H1 (cell line): ENCODE measurements at regions of chr5 and their contacts with region 1.

Region 1: GRCh38 chr5:168987543-168988300 is 313.2 kb downstream of the SLIT3 start:
- DNase-seq: peak; percentile 25 to 91
- H3K4me3 ChIP-seq: no peak overlapping the region
- H3K27ac ChIP-seq: no peak overlapping the region
- H3K4me1 ChIP-seq: peaks cover 3 to 22% (median 13%) of the 10 kb centered on the region in 4 experiments; a peak in 6 of 7 replicates
- H3K27me3 ChIP-seq: no peaks in the 10 kb centered on the region
- CTCF ChIP-seq: peak; percentile 46 to 85 (median 78)
- EP300 ChIP-seq: no peak
- POLR2A ChIP-seq: no peak
- RAD21 ChIP-seq: peak; percentile 92 to 94

Region 2: DNA sequence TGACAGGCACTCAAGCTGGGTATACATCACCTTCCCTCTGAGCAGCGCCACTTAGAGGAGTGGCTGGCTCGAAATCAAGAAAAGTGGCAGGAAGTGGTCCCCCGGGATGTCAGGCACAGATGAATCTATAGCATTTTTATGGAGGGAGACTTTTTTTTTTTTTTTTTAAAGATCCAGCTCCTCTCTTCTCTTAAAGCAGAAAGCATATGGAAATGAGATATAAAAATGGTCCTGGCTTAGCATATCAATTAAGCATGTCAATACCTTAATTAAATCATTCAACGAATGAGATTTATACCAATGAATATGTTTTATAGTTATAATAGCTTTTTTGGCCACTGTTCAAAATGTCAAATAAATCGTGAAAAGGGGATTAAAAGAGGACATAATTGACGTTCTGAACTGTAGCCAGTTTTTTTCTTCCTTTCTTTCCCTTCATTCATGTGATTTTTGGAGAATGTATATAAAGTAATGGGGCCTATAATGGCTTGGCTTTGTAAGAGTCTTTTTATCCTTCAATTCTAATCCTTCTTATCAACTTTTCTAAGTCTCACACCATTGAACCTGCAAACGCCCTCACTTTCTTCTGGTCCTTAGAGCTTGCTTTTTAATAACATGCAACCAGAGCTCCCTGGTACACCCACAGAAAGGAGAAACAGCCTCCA is 89.3 kb before region 1 on chr5:
- CTCF ChIA-PET with region 1: no interaction called
- POLR2A ChIA-PET with region 1: no interaction called
- DNase-seq: no peak
- H3K4me3 ChIP-seq: no peak overlapping the region
- H3K27ac ChIP-seq: no peak overlapping the region
- H3K4me1 ChIP-seq: peaks cover 0 to 2% (median under 1%) of the 10 kb centered on the region in 4 experiments; a peak in 3 of 7 replicates
- H3K27me3 ChIP-seq: no peaks in the 10 kb centered on the region
- CTCF ChIP-seq: no peak
- EP300 ChIP-seq: no peak
- POLR2A ChIP-seq: no peak
- RAD21 ChIP-seq: no peak

Region 3: GRCh38 chr5:168934169-168934568 is 53.6 kb before region 1 on chr5:
- CTCF ChIA-PET with region 1: no interaction called
- POLR2A ChIA-PET with region 1: no interaction called
- DNase-seq: no peak
- H3K4me3 ChIP-seq: no peak overlapping the region
- H3K27ac ChIP-seq: no peak overlapping the region
- H3K4me1 ChIP-seq: peaks cover 0 to 5% (median 3%) of the 10 kb centered on the region in 4 experiments; a peak in 4 of 7 replicates
- H3K27me3 ChIP-seq: no peaks in the 10 kb centered on the region
- CTCF ChIP-seq: no peak
- EP300 ChIP-seq: no peak
- POLR2A ChIP-seq: no peak
- RAD21 ChIP-seq: no peak

Region 4: DNA sequence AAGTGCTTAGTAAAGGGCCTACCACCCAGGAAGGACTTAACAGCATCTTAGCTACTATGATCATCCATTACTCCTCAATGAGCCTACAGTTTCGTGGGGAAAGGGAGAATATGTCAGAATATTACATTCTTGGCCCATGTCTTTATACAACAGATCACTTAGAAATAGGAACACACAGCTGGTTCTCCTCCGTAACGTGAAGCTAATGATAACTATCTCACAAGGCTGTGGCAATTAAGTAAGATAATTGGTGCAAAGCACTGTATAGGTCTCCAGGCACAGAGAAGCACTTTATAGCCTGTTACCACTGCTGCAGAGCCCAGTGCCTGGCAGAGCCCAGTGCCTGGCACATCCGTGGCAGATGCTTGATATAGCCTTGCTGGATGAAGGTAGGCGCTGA is 34.4 kb before region 1 on chr5:
- CTCF ChIA-PET with region 1: interaction called, 10 read pairs
- POLR2A ChIA-PET with region 1: no interaction called
- DNase-seq: no peak
- H3K4me3 ChIP-seq: no peak overlapping the region
- H3K27ac ChIP-seq: no peak overlapping the region
- H3K4me1 ChIP-seq: no peaks in the 10 kb centered on the region
- H3K27me3 ChIP-seq: no peaks in the 10 kb centered on the region
- CTCF ChIP-seq: no peak
- EP300 ChIP-seq: no peak
- POLR2A ChIP-seq: no peak
- RAD21 ChIP-seq: no peak

Region 5: DNA sequence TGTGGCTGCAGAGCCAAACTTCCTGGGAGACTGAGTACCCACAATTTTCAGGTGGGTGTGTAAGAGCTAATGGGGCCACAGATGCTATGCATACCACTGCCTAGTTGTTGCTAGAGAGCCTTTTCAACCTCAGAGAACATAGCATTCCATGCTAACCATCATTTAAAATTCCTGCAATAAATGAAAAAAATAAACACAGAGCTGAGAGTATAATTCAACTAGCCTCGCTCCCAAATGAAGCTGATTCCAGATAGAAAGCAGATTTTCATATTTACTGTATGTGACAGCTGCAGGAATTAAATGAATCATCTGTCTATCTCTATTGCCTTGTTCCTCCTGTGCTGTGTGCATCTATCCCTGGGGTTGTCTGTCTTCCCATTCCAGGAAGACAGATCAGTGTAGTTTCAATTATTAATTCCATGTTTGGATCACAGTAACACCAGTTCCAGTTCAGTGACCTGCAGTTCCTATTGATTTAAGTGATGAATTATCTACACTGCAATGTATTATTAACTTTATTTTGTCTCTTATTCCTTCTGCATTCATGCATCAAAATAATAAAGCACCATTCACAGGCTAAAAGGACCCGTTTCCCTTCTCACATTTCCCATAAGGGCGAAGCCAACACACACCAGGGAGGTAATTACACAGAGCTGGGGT is 11.3 kb before region 1 on chr5:
- CTCF ChIA-PET with region 1: interaction called, 18 read pairs
- POLR2A ChIA-PET with region 1: no interaction called
- DNase-seq: no peak
- H3K4me3 ChIP-seq: no peak overlapping the region
- H3K27ac ChIP-seq: no peak overlapping the region
- H3K4me1 ChIP-seq: peaks cover 0 to 9% (median 3%) of the 10 kb centered on the region in 4 experiments; a peak in 2 of 7 replicates
- H3K27me3 ChIP-seq: no peaks in the 10 kb centered on the region
- CTCF ChIP-seq: no peak
- EP300 ChIP-seq: no peak
- POLR2A ChIP-seq: no peak
- RAD21 ChIP-seq: no peak

Region 6: DNA sequence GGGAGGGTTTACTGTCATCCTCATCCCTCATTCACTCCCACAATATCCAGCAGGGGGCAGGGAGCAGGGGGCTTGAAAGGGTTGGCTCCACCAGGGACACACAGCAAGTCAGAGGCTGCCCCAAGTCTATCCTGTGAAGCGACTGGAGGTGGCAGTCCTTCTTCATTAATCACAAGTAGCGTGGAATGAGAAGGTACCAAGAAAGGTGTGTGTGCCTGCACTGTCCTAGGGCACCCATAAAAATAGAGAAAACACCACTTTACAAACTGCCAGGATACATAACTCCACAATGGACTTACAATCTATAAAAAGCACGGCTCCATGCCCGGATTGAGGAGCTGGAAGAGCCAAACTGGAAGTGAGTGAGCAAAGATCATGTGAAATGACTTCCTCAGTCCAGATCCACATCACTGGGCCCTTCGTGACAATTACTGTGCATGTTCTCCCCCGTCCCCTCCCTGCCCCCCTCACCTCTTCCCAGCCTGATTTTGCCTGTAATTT is 129.3 kb after region 1 on chr5:
- CTCF ChIA-PET with region 1: interaction called, 12 read pairs
- POLR2A ChIA-PET with region 1: no interaction called
- DNase-seq: peak in 1 of 2 experiments; percentile 43
- H3K4me3 ChIP-seq: no peak overlapping the region
- H3K27ac ChIP-seq: no peak overlapping the region
- H3K4me1 ChIP-seq: peaks cover 0 to 2% (median 0%) of the 10 kb centered on the region in 4 experiments; a peak in 1 of 7 replicates
- H3K27me3 ChIP-seq: no peaks in the 10 kb centered on the region
- CTCF ChIP-seq: peak; percentile 50 to 80 (median 69)
- EP300 ChIP-seq: no peak
- POLR2A ChIP-seq: no peak
- RAD21 ChIP-seq: peak; percentile 68 to 73

Region 7: DNA sequence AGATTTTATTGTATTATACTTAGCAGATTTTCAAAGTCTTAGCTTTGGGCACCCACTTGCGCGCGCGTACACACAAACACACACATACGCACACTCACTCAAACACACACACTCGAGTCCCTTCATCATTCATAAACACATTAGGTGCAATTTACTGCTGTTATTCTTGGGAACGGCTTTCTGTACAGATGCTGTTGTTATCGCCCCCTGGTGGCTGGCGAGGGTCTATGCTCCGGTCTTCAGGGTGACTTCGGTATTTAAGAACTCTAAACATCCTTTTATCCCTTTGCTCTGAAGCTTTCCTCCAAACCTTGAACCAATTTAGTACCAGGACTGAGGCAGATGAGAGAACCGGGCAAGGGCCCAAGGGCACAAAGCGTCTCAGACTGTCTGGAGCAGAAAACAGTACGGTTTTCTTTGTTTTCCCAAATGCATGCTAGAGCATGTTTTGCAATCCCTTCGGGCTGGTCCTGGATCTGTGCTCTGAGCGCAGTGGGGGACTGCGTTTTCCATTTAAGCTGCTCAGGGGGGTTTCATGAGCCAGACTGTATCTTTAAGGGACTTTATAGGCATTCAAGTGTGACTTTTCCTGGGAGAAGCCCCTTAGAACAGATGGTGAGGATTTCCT is 314.9 kb after region 1 on chr5:
- CTCF ChIA-PET with region 1: interaction called, 33 read pairs
- POLR2A ChIA-PET with region 1: no interaction called
- DNase-seq: peak in 1 of 2 experiments; percentile 83
- H3K4me3 ChIP-seq: no peak overlapping the region
- H3K27ac ChIP-seq: no peak overlapping the region
- H3K4me1 ChIP-seq: peaks cover 5 to 12% (median 7%) of the 10 kb centered on the region in 4 experiments; a peak in 6 of 7 replicates
- H3K27me3 ChIP-seq: peaks cover 7 to 41% (median 32%) of the 10 kb centered on the region in 4 experiments
- CTCF ChIP-seq: peak; percentile 73 to 93 (median 82)
- EP300 ChIP-seq: no peak
- POLR2A ChIP-seq: no peak
- RAD21 ChIP-seq: peak; percentile 77 to 78